ENCODE measurements at regions of chr16 and their contacts with region 1.

Region 1: GRCh38 chr16:9457215-9457614 is 365.8 kb downstream of the HAPSTR1 start:
- DNase-seq: no peak
- ATAC-seq: no peak
- H3K4me3 ChIP-seq: no peak overlapping the region
- H3K27ac ChIP-seq: no peak overlapping the region
- H3K4me1 ChIP-seq: no peaks in the 10 kb centered on the region
- H3K27me3 ChIP-seq: no peaks in the 10 kb centered on the region
- CTCF ChIP-seq: no peak
- POLR2A ChIP-seq: no peak
- RAD21 ChIP-seq: no peak

Region 2: GRCh38 chr16:9351440-9351839 is 105.8 kb before region 1 on chr16:
- CTCF ChIA-PET with region 1: no interaction called
- POLR2A ChIA-PET with region 1: no interaction called
- dilution Hi-C with region 1: no loop called
- in situ Hi-C with region 1: no loop called
- intact Hi-C with region 1: no loop called
- DNase-seq: no peak
- ATAC-seq: no peak
- H3K4me3 ChIP-seq: no peak overlapping the region
- H3K27ac ChIP-seq: no peak overlapping the region
- H3K4me1 ChIP-seq: no peaks in the 10 kb centered on the region
- H3K27me3 ChIP-seq: no peaks in the 10 kb centered on the region
- CTCF ChIP-seq: no peak
- POLR2A ChIP-seq: no peak
- RAD21 ChIP-seq: no peak

Region 3: DNA sequence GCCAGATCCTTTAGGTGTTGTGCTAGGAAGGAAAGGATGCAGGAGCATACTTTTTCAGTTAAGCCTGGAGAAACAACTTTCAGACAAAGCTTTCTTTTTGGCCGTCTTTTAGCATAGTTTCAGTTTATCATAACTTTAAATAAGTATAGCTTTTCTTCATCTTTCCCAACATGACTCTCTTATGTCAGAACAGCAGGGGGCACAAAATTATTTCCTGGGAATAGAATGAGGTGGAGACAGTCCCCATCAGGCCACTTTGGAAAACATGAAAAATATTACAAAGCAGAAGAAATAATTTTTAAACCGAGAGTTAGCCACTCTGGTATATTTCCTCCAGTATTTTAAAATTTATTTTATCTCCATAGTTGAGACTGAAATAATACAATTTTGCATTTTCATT is 21.8 kb after region 1 on chr16:
- CTCF ChIA-PET with region 1: no interaction called
- POLR2A ChIA-PET with region 1: no interaction called
- dilution Hi-C with region 1: no loop called
- in situ Hi-C with region 1: no loop called
- intact Hi-C with region 1: loop called (anchors 2 kb)
- DNase-seq: no peak
- ATAC-seq: no peak
- H3K4me3 ChIP-seq: no peak overlapping the region
- H3K27ac ChIP-seq: no peak overlapping the region
- H3K4me1 ChIP-seq: no peaks in the 10 kb centered on the region
- H3K27me3 ChIP-seq: no peaks in the 10 kb centered on the region
- CTCF ChIP-seq: no peak
- POLR2A ChIP-seq: no peak
- RAD21 ChIP-seq: no peak

Region 4: DNA sequence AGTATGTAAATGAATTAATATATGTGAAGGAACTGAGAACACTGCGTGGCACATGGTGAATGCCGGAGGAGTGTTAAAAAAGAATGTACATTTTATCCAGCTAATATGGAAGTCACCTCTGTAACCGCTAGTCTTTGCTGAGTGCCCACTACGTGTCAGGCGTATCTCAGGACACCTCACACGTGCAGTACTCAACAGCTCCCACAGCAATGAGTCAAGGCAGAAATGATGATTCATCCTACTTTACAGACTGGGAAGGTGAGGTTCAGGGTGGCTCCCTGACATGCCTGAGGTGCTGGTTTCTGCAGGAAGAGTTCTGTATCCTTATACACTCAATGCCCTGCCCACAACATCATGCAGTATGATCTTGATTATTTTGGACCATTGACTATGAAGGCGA is 121.2 kb after region 1 on chr16:
- CTCF ChIA-PET with region 1: no interaction called
- POLR2A ChIA-PET with region 1: no interaction called
- dilution Hi-C with region 1: no loop called
- in situ Hi-C with region 1: no loop called
- intact Hi-C with region 1: no loop called
- DNase-seq: no peak
- ATAC-seq: no peak
- H3K4me3 ChIP-seq: no peak overlapping the region
- H3K27ac ChIP-seq: no peak overlapping the region
- H3K4me1 ChIP-seq: no peaks in the 10 kb centered on the region
- H3K27me3 ChIP-seq: no peaks in the 10 kb centered on the region
- CTCF ChIP-seq: no peak
- POLR2A ChIP-seq: no peak
- RAD21 ChIP-seq: no peak